Activated B cell treated with CpG ODN at 0.5 μM for 24 hours (primary cell): ENCODE measurements at regions of chr14 and their contacts with region 1.

Region 1: DNA sequence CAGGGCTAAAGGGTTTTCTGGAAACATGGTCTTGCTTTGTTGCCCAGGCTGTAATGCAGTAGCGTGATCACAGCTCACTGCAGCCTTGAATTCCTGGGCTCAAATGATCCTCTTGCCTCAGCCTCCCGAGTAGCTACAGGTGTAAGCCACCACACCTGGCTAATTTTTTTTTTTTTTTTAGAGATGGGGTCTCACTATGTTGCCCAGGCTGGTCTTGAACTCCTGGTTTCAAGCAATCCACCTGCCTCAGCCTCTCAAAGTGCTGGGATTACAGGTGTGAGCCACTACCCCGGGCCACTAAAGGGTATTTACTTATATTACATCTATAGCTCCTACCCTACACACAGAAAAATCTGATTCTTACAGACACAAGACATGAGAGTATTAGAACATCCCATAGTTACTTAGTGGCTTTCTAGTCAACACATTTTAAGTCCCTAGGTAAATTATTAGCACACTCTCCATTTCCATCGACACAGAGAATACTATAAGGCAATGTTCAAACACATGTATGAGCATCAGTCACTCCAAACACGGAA is 6.2 kb upstream of the DCAF11 start:
- DNase-seq: no peak
- ATAC-seq: no peak
- H3K4me3 Mint-ChIP-seq: no peak overlapping the region
- H3K27ac Mint-ChIP-seq: peak overlapping the region; percentile 90
- H3K4me1 Mint-ChIP-seq: peaks cover 12% of the 10 kb centered on the region
- H3K27me3 Mint-ChIP-seq: no peaks in the 10 kb centered on the region
- CTCF ChIP-seq: no peak

Region 2: DNA sequence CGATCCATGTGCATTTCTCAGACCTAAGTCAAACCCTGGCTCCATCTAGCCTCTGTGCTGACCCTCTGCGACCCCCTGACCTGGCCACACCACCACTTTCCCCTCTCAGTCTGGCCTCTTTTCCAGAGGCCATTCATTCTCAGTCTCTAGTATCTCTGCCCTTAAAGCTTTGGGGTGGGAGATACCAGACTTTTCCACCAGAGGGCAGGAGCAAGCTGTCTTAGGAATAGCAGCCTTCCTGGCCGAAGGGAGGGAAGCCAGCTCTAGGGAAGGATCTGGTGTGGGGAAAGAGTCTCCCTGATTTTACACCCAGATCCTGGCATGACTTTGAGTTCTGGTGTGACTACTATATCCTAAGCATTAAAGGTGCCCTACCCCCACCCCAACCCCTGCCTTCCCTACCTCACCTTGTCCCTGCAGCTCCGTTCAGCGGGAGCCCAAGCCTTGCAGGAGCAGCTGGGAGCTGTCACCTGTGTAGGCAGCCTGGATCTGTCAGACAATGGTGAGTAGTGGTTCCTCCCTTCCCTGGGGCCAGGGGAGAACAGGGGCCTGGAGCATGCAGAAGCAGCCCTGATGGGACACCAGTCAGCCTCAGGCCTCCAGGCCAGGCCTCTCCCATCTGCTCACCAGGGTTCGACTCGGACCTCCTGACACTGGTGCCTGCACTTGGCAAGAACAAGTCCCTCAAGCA is 50.0 kb before region 1 on chr14:
- CTCF ChIA-PET with region 1: interaction called, 88 read pairs
- POLR2A ChIA-PET with region 1: interaction called, 10 read pairs
- intact Hi-C with region 1: loop called (anchors 1 kb)
- DNase-seq: no peak
- ATAC-seq: peak; percentile 84
- H3K4me3 Mint-ChIP-seq: no peak overlapping the region
- H3K27ac Mint-ChIP-seq: no peak overlapping the region
- H3K4me1 Mint-ChIP-seq: peaks cover 2% of the 10 kb centered on the region
- H3K27me3 Mint-ChIP-seq: no peaks in the 10 kb centered on the region
- CTCF ChIP-seq: no peak

Region 3: DNA sequence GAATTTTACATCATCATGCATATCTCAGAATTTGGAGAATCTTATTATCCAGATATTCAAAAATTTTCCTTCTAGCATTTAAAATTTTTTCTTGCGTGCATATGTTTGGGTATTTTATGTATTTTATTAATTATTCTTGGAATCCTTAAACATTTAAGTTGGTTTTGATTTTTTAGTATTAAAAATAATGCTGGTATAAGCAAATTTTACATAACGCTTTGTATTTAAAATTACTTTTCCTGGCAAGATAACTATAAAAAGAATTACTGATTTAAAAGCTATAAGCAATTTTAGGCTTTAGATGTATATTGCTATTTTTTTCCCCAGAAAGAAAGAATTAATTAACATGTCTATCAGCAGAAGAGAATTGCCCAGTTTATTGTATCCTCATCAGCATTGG is 1166.1 kb after region 1 on chr14:
- CTCF ChIA-PET with region 1: no interaction called
- POLR2A ChIA-PET with region 1: no interaction called
- intact Hi-C with region 1: no loop called
- DNase-seq: no peak
- ATAC-seq: no peak
- H3K4me3 Mint-ChIP-seq: no peak overlapping the region
- H3K27ac Mint-ChIP-seq: no peak overlapping the region
- H3K4me1 Mint-ChIP-seq: no peaks in the 10 kb centered on the region
- H3K27me3 Mint-ChIP-seq: no peaks in the 10 kb centered on the region
- CTCF ChIP-seq: no peak